B cell (primary cell): ENCODE measurements at regions of chr11 and their contacts with region 1.

Region 1: DNA sequence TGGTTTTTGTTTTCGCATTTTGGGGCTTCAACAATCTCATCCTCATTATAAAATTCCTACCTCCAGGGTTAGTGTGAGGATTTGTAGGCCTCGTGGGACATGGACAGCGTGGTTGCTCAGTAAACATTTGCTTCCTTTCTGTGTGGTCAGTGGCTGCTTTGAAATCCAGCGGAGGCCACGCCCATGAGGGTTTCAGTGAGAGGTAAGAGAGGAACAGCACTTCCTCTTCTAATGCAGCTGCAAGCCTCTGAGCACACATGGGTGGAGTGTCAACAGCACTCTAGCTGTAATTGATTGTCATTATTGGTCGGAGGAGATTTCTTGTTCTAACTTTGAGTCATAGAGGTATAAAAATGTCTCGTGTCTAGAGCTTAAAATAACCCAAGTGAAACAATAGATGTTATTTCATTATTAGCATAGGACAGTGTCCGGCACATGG is 6.0 kb upstream of the ARHGAP42 start:
- DNase-seq: peak; percentile 81
- ATAC-seq: peak; percentile 97
- H3K4me3 ChIP-seq: peak overlapping the region in 1 of 5 experiments; percentile 16
- H3K4me3 Mint-ChIP-seq: peak overlapping the region; percentile 61
- H3K27ac ChIP-seq: peak overlapping the region; percentile 77 to 80
- H3K27ac Mint-ChIP-seq: peak overlapping the region; percentile 87
- H3K4me1 ChIP-seq: peaks cover 42 to 49% of the 10 kb centered on the region in 2 donors
- H3K4me1 Mint-ChIP-seq: peaks cover 47% of the 10 kb centered on the region
- H3K27me3 ChIP-seq: no peaks in the 10 kb centered on the region
- H3K27me3 Mint-ChIP-seq: no peaks in the 10 kb centered on the region
- CTCF ChIP-seq: no peak

Region 2: GRCh38 chr11:100328658-100329315 is 352.3 kb before region 1 on chr11:
- CTCF ChIA-PET with region 1: no interaction called
- POLR2A ChIA-PET with region 1: no interaction called
- intact Hi-C with region 1: no loop called
- DNase-seq: no peak
- ATAC-seq: no peak
- H3K4me3 ChIP-seq: no peak overlapping the region
- H3K4me3 Mint-ChIP-seq: no peak overlapping the region
- H3K27ac ChIP-seq: no peak overlapping the region
- H3K27ac Mint-ChIP-seq: no peak overlapping the region
- H3K4me1 ChIP-seq: no peaks in the 10 kb centered on the region
- H3K4me1 Mint-ChIP-seq: no peaks in the 10 kb centered on the region
- H3K27me3 ChIP-seq: no peaks in the 10 kb centered on the region
- H3K27me3 Mint-ChIP-seq: no peaks in the 10 kb centered on the region
- CTCF ChIP-seq: no peak

Region 3: DNA sequence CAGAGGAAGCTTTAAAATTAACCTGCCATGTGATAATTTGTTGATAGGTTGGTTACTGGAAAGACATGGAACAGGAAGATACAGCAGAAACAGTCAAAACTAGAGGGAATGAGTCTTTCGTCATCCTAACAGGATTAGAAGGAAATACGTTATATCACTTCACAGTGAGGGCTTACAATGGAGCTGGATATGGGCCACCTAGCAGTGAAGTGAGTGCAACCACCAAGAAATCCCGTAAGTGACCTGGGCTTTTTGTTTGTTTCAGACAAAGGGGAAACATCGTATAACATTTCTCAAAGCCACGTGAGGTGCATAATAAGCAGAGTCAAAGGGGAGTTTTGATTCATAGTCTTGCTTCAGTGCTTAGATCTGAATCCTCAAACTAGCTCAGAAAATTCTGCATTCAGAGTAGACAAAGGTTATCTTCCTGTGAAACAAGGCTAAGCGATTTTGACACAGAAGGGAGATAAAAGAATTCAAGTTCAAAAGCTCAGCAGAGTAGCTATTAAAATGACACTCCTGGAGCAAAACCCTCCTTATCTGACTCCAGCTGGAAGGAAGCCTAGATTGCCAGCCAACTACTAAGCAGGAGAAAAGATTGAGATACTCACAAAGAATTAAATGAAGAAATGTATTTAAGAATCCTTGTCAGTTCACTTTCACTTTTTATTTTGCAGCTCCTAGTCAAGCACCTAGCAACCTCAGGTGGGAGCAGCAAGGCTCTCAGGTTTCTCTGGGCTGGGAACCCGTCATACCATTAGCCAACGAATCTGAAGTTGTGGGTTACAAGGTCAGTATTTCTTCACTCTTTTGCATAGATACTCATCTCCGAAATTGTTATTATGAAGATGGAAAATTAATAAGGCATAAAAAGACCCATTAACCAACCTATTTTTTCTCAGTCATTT is 340.4 kb before region 1 on chr11:
- CTCF ChIA-PET with region 1: no interaction called
- POLR2A ChIA-PET with region 1: no interaction called
- intact Hi-C with region 1: no loop called
- DNase-seq: no peak
- ATAC-seq: no peak
- H3K4me3 ChIP-seq: no peak overlapping the region
- H3K4me3 Mint-ChIP-seq: no peak overlapping the region
- H3K27ac ChIP-seq: no peak overlapping the region
- H3K27ac Mint-ChIP-seq: no peak overlapping the region
- H3K4me1 ChIP-seq: no peaks in the 10 kb centered on the region
- H3K4me1 Mint-ChIP-seq: no peaks in the 10 kb centered on the region
- H3K27me3 ChIP-seq: no peaks in the 10 kb centered on the region
- H3K27me3 Mint-ChIP-seq: no peaks in the 10 kb centered on the region
- CTCF ChIP-seq: no peak

Region 4: GRCh38 chr11:100612766-100613165 is 68.3 kb before region 1 on chr11:
- CTCF ChIA-PET with region 1: interaction called, 3 read pairs
- POLR2A ChIA-PET with region 1: no interaction called
- intact Hi-C with region 1: loop called (anchors 5 kb)
- DNase-seq: peak; percentile 73
- ATAC-seq: peak; percentile 97
- H3K4me3 ChIP-seq: peak overlapping the region in 1 of 5 experiments; percentile 1
- H3K4me3 Mint-ChIP-seq: peak overlapping the region; percentile 16
- H3K27ac ChIP-seq: peak overlapping the region in 1 of 2 donors; percentile 59
- H3K27ac Mint-ChIP-seq: peak overlapping the region; percentile 73
- H3K4me1 ChIP-seq: peaks cover 11 to 18% of the 10 kb centered on the region in 2 donors
- H3K4me1 Mint-ChIP-seq: peaks cover 22% of the 10 kb centered on the region
- H3K27me3 ChIP-seq: no peaks in the 10 kb centered on the region
- H3K27me3 Mint-ChIP-seq: no peaks in the 10 kb centered on the region
- CTCF ChIP-seq: no peak

Region 5: GRCh38 chr11:100706179-100706578 is 25.1 kb after region 1 on chr11:
- CTCF ChIA-PET with region 1: interaction called, 14 read pairs
- POLR2A ChIA-PET with region 1: no interaction called
- intact Hi-C with region 1: no loop called
- DNase-seq: no peak
- ATAC-seq: no peak
- H3K4me3 ChIP-seq: no peak overlapping the region
- H3K4me3 Mint-ChIP-seq: no peak overlapping the region
- H3K27ac ChIP-seq: no peak overlapping the region
- H3K27ac Mint-ChIP-seq: no peak overlapping the region
- H3K4me1 ChIP-seq: peaks cover 7 to 13% of the 10 kb centered on the region in 2 donors
- H3K4me1 Mint-ChIP-seq: peaks cover 20% of the 10 kb centered on the region
- H3K27me3 ChIP-seq: no peaks in the 10 kb centered on the region
- H3K27me3 Mint-ChIP-seq: no peaks in the 10 kb centered on the region
- CTCF ChIP-seq: no peak

Region 6: DNA sequence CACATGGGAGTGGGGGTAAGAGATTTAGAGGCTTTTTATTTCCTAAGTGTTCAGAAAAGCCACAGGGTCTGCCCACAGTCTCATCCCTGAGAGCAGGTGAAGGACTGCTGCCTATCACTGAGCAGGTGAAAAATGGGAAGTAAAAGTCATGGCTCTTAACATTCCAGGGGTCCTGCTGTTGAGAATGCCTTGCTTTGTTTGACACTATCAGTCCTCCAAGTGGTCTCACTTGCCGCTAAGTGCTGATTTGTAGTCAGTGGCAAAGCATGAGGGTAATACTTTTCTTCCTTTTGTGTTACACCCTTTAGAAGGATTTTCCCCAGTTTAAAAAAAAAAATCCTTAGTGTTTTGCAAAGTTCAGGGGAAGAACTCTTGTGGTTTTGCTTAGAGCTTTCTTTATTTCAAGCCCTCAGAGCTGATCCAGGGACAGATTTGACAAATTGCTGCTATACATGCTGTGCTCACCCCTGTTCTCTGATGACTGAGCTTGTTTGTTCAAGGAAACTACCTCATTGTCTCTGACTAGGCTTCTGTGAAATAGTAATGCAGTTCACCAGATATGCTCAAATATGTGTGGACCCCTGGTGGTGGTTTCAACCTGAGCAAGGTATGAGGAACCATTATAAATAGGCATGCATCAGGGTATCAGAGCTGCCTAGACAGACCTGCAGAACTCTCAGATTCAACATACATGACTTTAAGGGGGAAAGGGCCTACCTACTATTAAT is 147.0 kb after region 1 on chr11:
- CTCF ChIA-PET with region 1: interaction called, 8 read pairs
- POLR2A ChIA-PET with region 1: no interaction called
- intact Hi-C with region 1: loop called (anchors 2 kb)
- DNase-seq: peak; percentile 56
- ATAC-seq: peak; percentile 62
- H3K4me3 ChIP-seq: no peak overlapping the region
- H3K4me3 Mint-ChIP-seq: no peak overlapping the region
- H3K27ac ChIP-seq: no peak overlapping the region
- H3K27ac Mint-ChIP-seq: no peak overlapping the region
- H3K4me1 ChIP-seq: peaks cover 0 to 4% of the 10 kb centered on the region in 2 donors
- H3K4me1 Mint-ChIP-seq: peaks cover 4% of the 10 kb centered on the region
- H3K27me3 ChIP-seq: no peaks in the 10 kb centered on the region
- H3K27me3 Mint-ChIP-seq: no peaks in the 10 kb centered on the region
- CTCF ChIP-seq: no peak

Region 7: GRCh38 chr11:100855466-100856067 is 174.5 kb after region 1 on chr11:
- CTCF ChIA-PET with region 1: interaction called, 19 read pairs
- POLR2A ChIA-PET with region 1: no interaction called
- intact Hi-C with region 1: no loop called
- DNase-seq: peak; percentile 59
- ATAC-seq: no peak
- H3K4me3 ChIP-seq: no peak overlapping the region
- H3K4me3 Mint-ChIP-seq: no peak overlapping the region
- H3K27ac ChIP-seq: no peak overlapping the region
- H3K27ac Mint-ChIP-seq: no peak overlapping the region
- H3K4me1 ChIP-seq: no peaks in the 10 kb centered on the region
- H3K4me1 Mint-ChIP-seq: no peaks in the 10 kb centered on the region
- H3K27me3 ChIP-seq: no peaks in the 10 kb centered on the region
- H3K27me3 Mint-ChIP-seq: no peaks in the 10 kb centered on the region
- CTCF ChIP-seq: peak; percentile 79

Region 8: DNA sequence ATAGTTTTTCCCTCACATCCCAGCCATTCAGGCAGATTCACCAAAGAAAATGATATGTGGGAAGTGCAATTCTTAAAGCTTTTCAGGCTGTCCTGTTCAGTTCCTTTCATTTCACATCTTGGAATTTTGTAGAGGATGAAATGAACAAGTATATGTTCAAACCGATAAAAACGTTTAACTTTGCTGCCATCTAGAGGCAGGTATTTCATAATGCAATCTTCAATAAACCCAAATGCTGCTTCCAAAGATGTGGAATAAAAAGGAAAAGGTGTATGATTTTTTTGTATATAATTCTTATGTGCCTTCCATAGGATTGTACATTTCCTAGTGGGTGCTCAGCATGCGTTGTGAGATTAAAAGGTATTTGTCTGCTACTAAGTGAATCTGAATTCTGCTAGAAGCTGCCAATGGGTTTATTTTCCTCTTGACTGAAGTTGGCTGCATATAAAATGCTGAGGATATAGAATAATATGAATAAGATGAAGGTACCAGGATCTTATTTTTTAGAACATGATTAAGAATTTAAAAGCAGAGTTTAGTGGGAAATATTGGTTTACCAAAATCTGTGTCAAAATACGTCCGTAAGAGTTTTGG is 249.2 kb after region 1 on chr11:
- CTCF ChIA-PET with region 1: interaction called, 13 read pairs
- POLR2A ChIA-PET with region 1: no interaction called
- intact Hi-C with region 1: loop called (anchors 2 kb)
- DNase-seq: peak; percentile 51
- ATAC-seq: no peak
- H3K4me3 ChIP-seq: no peak overlapping the region
- H3K4me3 Mint-ChIP-seq: no peak overlapping the region
- H3K27ac ChIP-seq: no peak overlapping the region
- H3K27ac Mint-ChIP-seq: no peak overlapping the region
- H3K4me1 ChIP-seq: peaks cover 2 to 7% of the 10 kb centered on the region in 2 donors
- H3K4me1 Mint-ChIP-seq: peaks cover 17% of the 10 kb centered on the region
- H3K27me3 ChIP-seq: no peaks in the 10 kb centered on the region
- H3K27me3 Mint-ChIP-seq: no peaks in the 10 kb centered on the region
- CTCF ChIP-seq: peak; percentile 87

Region 9: DNA sequence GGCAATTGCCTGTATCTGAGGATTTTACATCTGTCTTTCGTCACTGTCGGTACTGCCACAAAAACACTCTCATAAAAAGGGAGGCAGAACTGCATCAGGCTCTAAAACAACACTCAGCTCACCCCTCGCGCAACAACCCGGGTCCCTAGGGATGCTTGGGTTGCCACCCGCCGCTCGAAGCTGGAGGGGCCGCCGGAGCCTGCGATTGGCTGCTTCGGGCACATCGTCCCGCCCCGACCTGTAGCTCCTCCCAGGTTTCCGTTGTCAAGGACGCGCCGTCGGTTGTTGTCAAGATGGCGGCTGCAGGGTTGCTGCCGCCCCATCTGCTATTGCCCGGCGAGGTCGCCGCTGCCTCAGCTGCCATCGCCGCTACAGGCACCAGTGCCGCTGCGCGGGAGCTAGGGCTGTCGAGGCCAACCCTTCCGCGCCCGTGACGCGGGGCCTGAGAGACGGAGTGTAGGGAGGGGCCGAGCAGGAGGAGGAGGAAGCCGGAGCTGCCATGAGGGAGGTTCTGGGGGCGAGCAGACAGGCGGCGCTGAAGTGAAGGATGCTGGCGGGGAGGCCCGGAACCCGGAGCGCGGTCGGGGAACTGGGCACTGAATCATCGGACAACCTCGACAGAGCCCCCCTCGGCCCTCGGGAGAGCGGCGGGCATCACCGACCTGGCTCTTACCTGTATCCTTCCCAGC is 1233.8 kb after region 1 on chr11 and contains the start of gene CEP126:
- CTCF ChIA-PET with region 1: no interaction called
- POLR2A ChIA-PET with region 1: no interaction called
- intact Hi-C with region 1: loop called (anchors 5 kb)
- DNase-seq: peak; percentile 98
- ATAC-seq: peak; percentile 90
- H3K4me3 ChIP-seq: peak within 1 kb of the TSS; percentile 53 to 88 (median 81)
- H3K4me3 Mint-ChIP-seq: peak within 1 kb of the TSS; percentile 96
- H3K27ac ChIP-seq: peak within 1 kb of the TSS; percentile 92 to 99
- H3K27ac Mint-ChIP-seq: peak within 1 kb of the TSS; percentile 97
- H3K4me1 ChIP-seq: peaks cover 18 to 21% of the 10 kb centered on the region in 2 donors
- H3K4me1 Mint-ChIP-seq: peaks cover 23% of the 10 kb centered on the region
- H3K27me3 ChIP-seq: no peaks in the 10 kb centered on the region
- H3K27me3 Mint-ChIP-seq: peaks cover 11% of the 10 kb centered on the region
- CTCF ChIP-seq: peak; percentile 23
- total RNA-seq, gene CEP126: 9.1 and 9.4 TPM in 2 replicates